GM12878 (cell line): ENCODE measurements at regions of chr19 and their contacts with region 1.

Region 1: GRCh38 chr19:53103198-53103944 is at the start of gene ZNF160:
- DNase-seq: peak; percentile 89
- ATAC-seq: peak; percentile 98
- H3K4me3 ChIP-seq: peak within 1 kb of the TSS; percentile 84
- H3K27ac ChIP-seq: peak within 1 kb of the TSS; percentile 87
- H3K4me1 ChIP-seq: 0 out of 2 replicates have a peak, but pooled peaks cover 4% of the 10 kb centered on the region
- H3K27me3 ChIP-seq: no peaks in the 10 kb centered on the region
- CTCF ChIP-seq: no peak
- EP300 ChIP-seq: no peak
- POLR2A ChIP-seq: peak; percentile 98
- RAD21 ChIP-seq: no peak
- polyA plus RNA-seq, gene ZNF160: 2.8 to 3.2 TPM

Region 2: GRCh38 chr19:52962394-52963246 is 140.8 kb before region 1 on chr19 and contains the start of gene ZNF816:
- CTCF ChIA-PET with region 1: no interaction called
- POLR2A ChIA-PET with region 1: interaction called, 3 read pairs
- RAD21 ChIA-PET with region 1: no interaction called
- SMC1A ChIA-PET with region 1: no interaction called
- in situ Hi-C with region 1: no loop called
- intact Hi-C with region 1: loop called (anchors 5 kb)
- DNase-seq: peak; percentile 70
- ATAC-seq: peak; percentile 100
- H3K4me3 ChIP-seq: peak within 1 kb of the TSS; percentile 77
- H3K27ac ChIP-seq: peak within 1 kb of the TSS; percentile 60
- H3K4me1 ChIP-seq: peaks cover 4% of the 10 kb centered on the region; the same call in 1 of the 2 replicates
- H3K27me3 ChIP-seq: no peaks in the 10 kb centered on the region
- CTCF ChIP-seq: no peak
- EP300 ChIP-seq: no peak
- POLR2A ChIP-seq: peak; percentile 91
- RAD21 ChIP-seq: no peak
- polyA plus RNA-seq, gene ZNF816: 4.4 to 6.6 TPM

Region 3: GRCh38 chr19:54102421-54103169 is 999.2 kb after region 1 on chr19 and contains the start of gene NDUFA3:
- CTCF ChIA-PET with region 1: no interaction called
- POLR2A ChIA-PET with region 1: no interaction called
- RAD21 ChIA-PET with region 1: no interaction called
- SMC1A ChIA-PET with region 1: no interaction called
- in situ Hi-C with region 1: no loop called
- intact Hi-C with region 1: loop called (anchors 10 kb)
- DNase-seq: peak; percentile 95
- ATAC-seq: peak; percentile 99
- H3K4me3 ChIP-seq: peak within 1 kb of the TSS; percentile 85
- H3K27ac ChIP-seq: peak within 1 kb of the TSS; percentile 75
- H3K4me1 ChIP-seq: no peaks in the 10 kb centered on the region
- H3K27me3 ChIP-seq: no peaks in the 10 kb centered on the region
- CTCF ChIP-seq: no peak
- EP300 ChIP-seq: no peak
- POLR2A ChIP-seq: peak; percentile 94
- RAD21 ChIP-seq: no peak
- polyA plus RNA-seq, gene NDUFA3: 295 to 302 TPM